Activated naive CD4-positive, alpha-beta T cell treated with anti-CD3 and anti-CD28 coated beads for 36 hours (primary cell): ENCODE measurements at regions of chr6 and their contacts with region 1.

Region 1: GRCh38 chr6:52839119-52840055 is 1.2 kb downstream of the GSTA5 start:
- DNase-seq: peak; percentile 66
- H3K4me3 Mint-ChIP-seq: no peak overlapping the region
- H3K27ac Mint-ChIP-seq: no peak overlapping the region
- H3K4me1 Mint-ChIP-seq: no peaks in the 10 kb centered on the region
- H3K27me3 Mint-ChIP-seq: peaks cover 32% of the 10 kb centered on the region

Region 2: GRCh38 chr6:52284460-52285176 is 554.8 kb before region 1 on chr6 and contains the start of gene MCM3:
- CTCF ChIA-PET with region 1: no interaction called
- intact Hi-C with region 1: no loop called
- DNase-seq: peak; percentile 98
- H3K4me3 Mint-ChIP-seq: no peak within 1 kb of the TSS
- H3K27ac Mint-ChIP-seq: no peak within 1 kb of the TSS
- H3K4me1 Mint-ChIP-seq: peaks cover 51% of the 10 kb centered on the region
- H3K27me3 Mint-ChIP-seq: no peaks in the 10 kb centered on the region
- total RNA-seq, gene MCM3: 256 to 258 TPM

Region 3: DNA sequence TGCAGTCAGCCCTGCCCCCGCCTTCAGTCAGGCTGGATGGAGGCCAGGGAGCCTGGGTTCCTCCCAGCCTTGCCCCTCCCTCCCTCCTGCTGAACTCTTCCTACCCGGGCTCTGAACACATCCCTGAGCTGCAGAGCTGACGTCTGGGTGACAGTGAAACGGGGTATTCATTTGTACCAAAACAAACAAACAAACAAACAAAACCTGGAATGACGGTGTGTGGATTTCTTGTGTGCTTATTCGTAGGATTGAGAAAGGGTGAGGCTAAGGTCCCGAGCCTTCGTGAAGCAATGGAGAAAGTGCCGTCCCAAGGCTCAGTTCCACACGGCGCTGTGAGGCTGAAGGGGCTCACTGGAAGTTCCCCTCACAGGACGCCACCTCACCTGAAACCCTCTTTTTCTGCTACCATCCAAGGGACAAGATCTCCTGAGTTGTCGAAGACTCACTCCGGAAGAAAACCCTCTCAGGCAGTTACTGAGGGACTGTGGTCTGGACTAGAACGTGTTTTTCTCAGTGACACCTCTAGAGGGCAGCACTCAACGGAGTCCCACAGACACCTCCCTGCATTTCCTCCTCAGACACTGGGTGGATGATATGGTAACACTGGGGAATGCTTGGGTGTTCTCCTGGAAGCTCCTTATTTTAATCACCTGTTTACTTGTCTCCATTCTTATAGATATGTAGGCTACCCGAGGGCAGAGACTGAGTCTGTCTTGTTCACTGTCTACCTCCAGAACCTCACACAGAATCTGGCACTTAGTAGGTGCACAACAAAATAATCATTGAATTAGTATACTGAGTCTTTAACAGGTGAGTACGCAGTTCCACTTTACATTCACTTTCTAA is 42.8 kb after region 1 on chr6:
- CTCF ChIA-PET with region 1: no interaction called
- intact Hi-C with region 1: loop called (anchors 2 kb)
- DNase-seq: peak; percentile 84
- H3K4me3 Mint-ChIP-seq: peak overlapping the region; percentile 71
- H3K27ac Mint-ChIP-seq: peak overlapping the region; percentile 27
- H3K4me1 Mint-ChIP-seq: peaks cover 5% of the 10 kb centered on the region
- H3K27me3 Mint-ChIP-seq: peaks cover 2% of the 10 kb centered on the region

Region 4: GRCh38 chr6:53391170-53391569 is 551.8 kb after region 1 on chr6:
- CTCF ChIA-PET with region 1: no interaction called
- intact Hi-C with region 1: no loop called
- DNase-seq: no peak
- H3K4me3 Mint-ChIP-seq: no peak overlapping the region
- H3K27ac Mint-ChIP-seq: no peak overlapping the region
- H3K4me1 Mint-ChIP-seq: no peaks in the 10 kb centered on the region
- H3K27me3 Mint-ChIP-seq: no peaks in the 10 kb centered on the region